ENCODE measurements at regions of chr11 and their contacts with region 1.

Region 1: DNA sequence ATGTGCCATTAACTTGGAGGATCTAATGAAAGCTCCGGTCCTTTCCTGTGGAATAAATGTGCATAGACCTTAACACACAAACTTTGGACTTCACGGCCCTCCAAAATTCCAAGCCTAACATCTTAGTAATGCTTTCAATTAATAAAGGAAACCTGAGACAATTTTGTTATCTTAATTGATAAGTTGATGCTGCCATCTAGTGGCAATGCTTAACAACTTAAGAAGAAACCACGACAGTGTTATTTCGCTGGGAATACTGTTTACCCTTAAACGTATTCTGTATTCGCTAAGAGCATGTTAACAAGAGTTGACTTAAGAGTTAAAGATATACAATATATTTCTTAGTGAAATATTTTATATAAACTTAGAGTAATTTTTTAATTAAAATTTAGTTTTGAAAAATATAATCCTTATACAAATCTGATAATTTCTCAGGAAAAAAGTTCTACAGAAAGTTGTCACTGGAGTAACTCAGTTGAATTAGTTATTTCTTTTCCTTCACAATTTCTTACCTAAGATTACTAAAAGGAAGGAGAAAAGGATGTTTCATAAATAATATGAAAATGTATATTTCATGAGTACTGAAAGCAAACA is 35.0 kb upstream of the OR9G4 start:
- DNase-seq: peak; percentile 66
- H3K4me3 ChIP-seq: no peak overlapping the region
- H3K27ac ChIP-seq: no peak overlapping the region
- H3K4me1 ChIP-seq: no peaks in the 10 kb centered on the region
- CTCF ChIP-seq: peak; percentile 85

Region 2: DNA sequence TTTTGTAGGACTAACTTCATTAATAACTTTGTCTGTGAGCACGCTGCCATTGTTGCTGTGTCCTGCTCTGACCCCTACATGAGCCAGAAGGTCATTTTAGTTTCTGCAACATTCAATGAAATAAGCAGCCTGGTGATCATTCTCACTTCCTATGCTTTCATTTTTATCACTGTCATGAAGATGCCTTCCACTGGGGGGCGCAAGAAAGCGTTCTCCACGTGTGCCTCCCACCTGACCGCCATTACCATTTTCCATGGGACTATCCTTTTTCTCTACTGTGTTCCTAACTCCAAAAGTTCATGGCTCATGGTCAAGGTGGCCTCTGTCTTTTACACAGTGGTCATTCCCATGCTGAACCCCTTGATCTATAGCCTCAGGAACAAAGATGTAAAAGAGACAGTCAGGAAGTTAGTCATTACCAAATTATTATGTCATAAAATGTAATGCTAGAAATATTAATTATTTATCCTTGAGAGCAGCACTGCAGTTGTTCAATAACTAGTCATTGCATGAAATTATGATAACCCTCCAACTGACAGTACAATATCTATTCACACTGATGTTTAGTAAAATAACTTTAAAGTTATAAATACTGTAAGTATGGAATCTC is 1056.7 kb before region 1 on chr11:
- CTCF ChIA-PET with region 1: no interaction called
- POLR2A ChIA-PET with region 1: no interaction called
- intact Hi-C with region 1: loop called (anchors 5 kb)
- DNase-seq: peak; percentile 4
- H3K4me3 ChIP-seq: no peak overlapping the region
- H3K27ac ChIP-seq: no peak overlapping the region
- H3K4me1 ChIP-seq: no peaks in the 10 kb centered on the region
- CTCF ChIP-seq: peak; percentile 68

Region 3: GRCh38 chr11:55942785-55943392 is 840.7 kb before region 1 on chr11:
- CTCF ChIA-PET with region 1: no interaction called
- POLR2A ChIA-PET with region 1: no interaction called
- intact Hi-C with region 1: loop called (anchors 5 kb)
- DNase-seq: peak; percentile 32
- H3K4me3 ChIP-seq: no peak overlapping the region
- H3K27ac ChIP-seq: no peak overlapping the region
- H3K4me1 ChIP-seq: no peaks in the 10 kb centered on the region
- CTCF ChIP-seq: peak; percentile 83

Region 4: GRCh38 chr11:56380120-56380519 is 403.4 kb before region 1 on chr11:
- CTCF ChIA-PET with region 1: no interaction called
- POLR2A ChIA-PET with region 1: no interaction called
- intact Hi-C with region 1: no loop called
- DNase-seq: no peak
- H3K4me3 ChIP-seq: no peak overlapping the region
- H3K27ac ChIP-seq: no peak overlapping the region
- H3K4me1 ChIP-seq: no peaks in the 10 kb centered on the region
- CTCF ChIP-seq: no peak

Region 5: GRCh38 chr11:56624661-56625110 is 158.9 kb before region 1 on chr11:
- CTCF ChIA-PET with region 1: no interaction called
- POLR2A ChIA-PET with region 1: no interaction called
- intact Hi-C with region 1: loop called (anchors 10 kb)
- DNase-seq: peak; percentile 11
- H3K4me3 ChIP-seq: no peak overlapping the region
- H3K27ac ChIP-seq: no peak overlapping the region
- H3K4me1 ChIP-seq: no peaks in the 10 kb centered on the region
- CTCF ChIP-seq: peak; percentile 74

Region 6: DNA sequence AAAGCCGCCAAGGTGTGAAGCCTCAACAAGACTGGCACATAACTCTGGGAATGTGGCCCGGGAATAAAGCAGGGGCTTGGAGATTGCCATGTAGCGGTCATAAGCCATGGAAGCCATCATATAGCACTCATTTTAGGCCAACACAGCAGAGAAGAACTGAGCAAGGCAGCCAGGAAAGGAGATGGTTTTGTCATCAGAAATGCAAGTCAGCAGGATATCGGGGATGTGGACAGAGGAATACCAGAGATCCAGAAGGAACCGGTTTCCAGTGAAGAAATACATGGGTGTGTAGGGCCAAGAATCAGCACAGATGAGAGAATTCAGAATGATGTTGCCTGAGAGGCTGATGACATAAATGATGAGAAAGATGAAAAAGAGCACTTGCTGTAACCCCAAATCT is 32.1 kb before region 1 on chr11:
- CTCF ChIA-PET with region 1: no interaction called
- POLR2A ChIA-PET with region 1: no interaction called
- intact Hi-C with region 1: loop called (anchors 1 kb)
- DNase-seq: no peak
- H3K4me3 ChIP-seq: no peak overlapping the region
- H3K27ac ChIP-seq: no peak overlapping the region
- H3K4me1 ChIP-seq: no peaks in the 10 kb centered on the region
- CTCF ChIP-seq: no peak

Measured in OCI-LY7 (cell line).